Breast epithelium (tissue), 4 donors: ENCODE measurements at regions of chr3 and their contacts with region 1.

Region 1: DNA sequence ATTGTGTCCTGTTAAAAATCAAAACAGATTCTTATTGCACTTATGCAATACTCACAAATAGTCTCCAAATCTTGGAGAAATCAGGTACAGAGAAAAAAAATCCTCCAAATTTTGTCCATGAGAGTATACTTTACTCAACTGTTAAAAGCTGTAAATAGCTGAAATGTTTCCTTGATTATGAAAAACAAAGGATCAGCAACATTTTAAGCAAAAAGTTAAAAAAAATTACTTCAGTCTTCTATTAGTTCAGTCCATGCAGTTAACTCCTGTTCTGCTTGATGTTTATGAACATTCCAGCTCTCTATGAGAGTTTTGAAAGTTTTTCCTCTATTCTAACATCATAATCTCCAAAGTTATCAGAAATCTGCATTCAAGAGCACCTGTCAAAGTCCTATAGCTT is 22.8 kb upstream of the ZNF80 start:
- DNase-seq: no peak
- H3K4me3 ChIP-seq: no peak overlapping the region
- H3K27ac ChIP-seq: no peak overlapping the region
- H3K4me1 ChIP-seq: no peaks in the 10 kb centered on the region
- H3K27me3 ChIP-seq: no peaks in the 10 kb centered on the region
- CTCF ChIP-seq: no peak
- POLR2A ChIP-seq: no peak

Region 2: GRCh38 chr3:112405845-112406244 is 1854.3 kb before region 1 on chr3:
- intact Hi-C with region 1: no loop called
- DNase-seq: no peak
- H3K4me3 ChIP-seq: no peak overlapping the region
- H3K27ac ChIP-seq: no peak overlapping the region
- H3K4me1 ChIP-seq: no peaks in the 10 kb centered on the region
- H3K27me3 ChIP-seq: no peaks in the 10 kb centered on the region
- CTCF ChIP-seq: no peak
- POLR2A ChIP-seq: no peak

Region 3: DNA sequence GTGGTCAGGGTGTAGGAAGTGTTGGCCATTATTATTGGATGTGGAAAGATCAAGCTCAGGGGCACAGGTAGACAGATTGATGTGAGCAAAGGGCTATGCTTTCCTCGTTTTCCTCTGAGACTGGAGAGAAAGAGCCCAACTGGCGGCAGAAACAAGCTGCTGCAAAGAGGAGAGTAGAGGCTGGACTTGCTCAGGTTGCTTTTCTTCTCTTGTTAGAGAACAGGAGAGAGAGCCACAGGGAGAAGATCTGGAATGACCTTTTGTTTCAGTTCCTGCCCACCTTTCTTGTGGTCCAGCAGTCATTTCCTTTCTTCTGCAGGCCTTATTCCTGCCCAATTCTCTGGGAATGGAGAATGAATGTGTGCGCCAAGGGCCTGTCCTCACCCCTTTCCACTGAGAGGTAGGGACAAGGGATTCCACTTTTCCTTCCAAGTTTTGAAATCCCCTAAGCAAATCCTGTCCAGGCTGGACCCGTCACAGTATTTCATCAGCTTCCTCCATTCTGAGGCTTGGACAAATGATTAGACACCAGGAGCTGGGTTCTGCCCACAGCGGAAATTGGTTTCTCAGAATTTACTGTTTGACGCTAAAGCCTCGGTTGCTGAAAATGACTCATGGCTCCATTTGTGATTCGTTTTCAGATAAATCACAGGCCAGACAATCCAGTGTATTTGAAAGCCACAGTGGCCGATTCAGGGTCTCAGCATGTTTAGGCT is 38.8 kb before region 1 on chr3:
- intact Hi-C with region 1: loop called (anchors 2 kb)
- DNase-seq: no peak
- H3K4me3 ChIP-seq: no peak overlapping the region
- H3K27ac ChIP-seq: no peak overlapping the region
- H3K4me1 ChIP-seq: no peaks in the 10 kb centered on the region
- H3K27me3 ChIP-seq: no peaks in the 10 kb centered on the region
- CTCF ChIP-seq: no peak
- POLR2A ChIP-seq: no peak

Region 4: GRCh38 chr3:114668099-114668498 is 407.9 kb after region 1 on chr3:
- intact Hi-C with region 1: no loop called
- DNase-seq: no peak
- H3K4me3 ChIP-seq: no peak overlapping the region
- H3K27ac ChIP-seq: no peak overlapping the region
- H3K4me1 ChIP-seq: no peaks in the 10 kb centered on the region
- H3K27me3 ChIP-seq: no peaks in the 10 kb centered on the region
- CTCF ChIP-seq: no peak
- POLR2A ChIP-seq: no peak